ENCODE measurements at regions of chr10 and their contacts with region 1.

Region 1: DNA sequence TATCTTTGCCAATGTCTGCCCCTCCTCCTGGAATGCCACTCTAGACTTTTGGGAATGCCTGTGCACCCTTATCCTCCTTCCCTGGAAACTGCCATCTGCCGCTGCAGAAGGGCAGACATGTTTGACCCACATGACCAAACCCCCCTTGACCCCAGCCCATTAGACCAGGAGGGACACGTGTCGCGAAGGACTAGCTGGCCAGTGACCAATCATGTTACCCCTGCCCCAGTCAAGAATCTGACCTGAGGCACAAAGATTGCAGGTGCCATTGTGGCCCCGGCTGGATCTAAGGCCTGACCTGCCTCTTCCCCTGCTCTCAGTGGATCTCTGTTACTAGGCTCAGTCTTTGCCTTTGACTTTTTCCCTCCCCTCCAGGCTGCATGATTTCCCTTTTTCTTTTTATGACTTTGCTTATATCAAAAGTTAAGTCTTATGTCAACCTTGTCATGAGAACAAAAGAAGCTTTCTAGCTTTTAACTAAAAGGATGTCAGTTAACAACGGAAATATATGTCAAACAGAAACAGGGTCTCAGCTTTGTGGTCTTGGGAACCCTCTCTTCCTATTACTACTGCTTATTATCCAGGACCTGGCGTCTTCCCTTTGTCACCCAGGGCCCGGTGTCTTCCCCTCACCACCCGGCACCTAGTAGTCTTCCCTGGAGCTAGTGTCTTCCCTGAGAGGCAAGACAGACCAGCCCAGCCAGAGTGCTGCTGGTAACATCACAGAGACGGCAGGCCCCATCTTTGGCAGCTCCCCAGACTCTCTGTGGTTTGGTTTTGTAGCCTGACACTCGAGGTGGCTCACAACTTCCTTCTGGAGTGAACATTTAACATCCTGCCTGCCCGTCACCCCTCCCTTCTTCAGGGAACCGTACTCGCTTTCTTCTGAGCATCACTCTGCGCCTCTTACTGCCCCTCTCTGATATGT is 24.4 kb upstream of the PPIF start:
- DNase-seq: peak; percentile 95
- H3K4me3 Mint-ChIP-seq: peak overlapping the region; percentile 33
- H3K27ac Mint-ChIP-seq: peak overlapping the region; percentile 92
- H3K4me1 Mint-ChIP-seq: peaks cover 68% of the 10 kb centered on the region
- H3K27me3 Mint-ChIP-seq: no peaks in the 10 kb centered on the region

Region 2: GRCh38 chr10:79249186-79250121 is 73.4 kb before region 1 on chr10:
- CTCF ChIA-PET with region 1: interaction called, 3 read pairs
- intact Hi-C with region 1: loop called (anchors 1 kb)
- DNase-seq: peak; percentile 61
- H3K4me3 Mint-ChIP-seq: peak overlapping the region; percentile 37
- H3K27ac Mint-ChIP-seq: peak overlapping the region; percentile 73
- H3K4me1 Mint-ChIP-seq: peaks cover 50% of the 10 kb centered on the region
- H3K27me3 Mint-ChIP-seq: no peaks in the 10 kb centered on the region

Region 3: DNA sequence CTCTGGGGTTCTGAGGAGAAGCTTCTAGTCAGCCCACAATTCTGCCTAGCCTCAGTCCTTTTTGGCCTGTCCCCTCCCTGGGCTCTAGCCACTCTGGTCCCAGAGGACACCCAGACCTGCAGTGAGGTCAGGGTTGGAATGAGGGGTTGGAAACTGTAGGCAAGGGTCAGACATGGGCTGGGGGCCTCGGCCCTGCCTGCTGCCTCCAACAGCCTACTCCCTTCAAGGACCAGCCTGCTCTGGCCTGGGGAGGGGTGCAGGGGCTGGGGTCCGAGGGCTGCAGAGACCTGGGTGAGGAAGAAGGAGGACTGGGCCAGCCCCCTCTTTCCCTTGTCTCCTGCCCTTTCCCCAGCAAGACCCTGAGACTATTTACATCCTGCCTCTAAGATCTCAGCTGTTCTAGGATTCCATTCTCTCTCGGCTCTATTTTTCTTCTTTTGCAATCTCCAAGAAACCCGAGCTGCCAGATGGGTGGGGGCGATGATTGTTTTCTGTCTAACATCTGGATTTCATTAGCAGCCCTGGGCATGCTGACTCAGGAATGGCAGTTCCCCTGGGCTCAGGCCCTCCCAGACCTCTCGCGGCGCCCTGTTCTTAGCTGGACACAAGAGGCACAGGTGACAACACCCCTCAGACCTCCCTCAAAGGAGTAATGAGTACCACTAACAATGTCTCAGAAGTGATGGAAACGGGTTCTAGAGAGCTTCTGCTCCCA is 99.5 kb after region 1 on chr10:
- CTCF ChIA-PET with region 1: no interaction called
- intact Hi-C with region 1: no loop called
- DNase-seq: no peak
- H3K4me3 Mint-ChIP-seq: no peak overlapping the region
- H3K27ac Mint-ChIP-seq: no peak overlapping the region
- H3K4me1 Mint-ChIP-seq: no peaks in the 10 kb centered on the region
- H3K27me3 Mint-ChIP-seq: no peaks in the 10 kb centered on the region

Region 4: DNA sequence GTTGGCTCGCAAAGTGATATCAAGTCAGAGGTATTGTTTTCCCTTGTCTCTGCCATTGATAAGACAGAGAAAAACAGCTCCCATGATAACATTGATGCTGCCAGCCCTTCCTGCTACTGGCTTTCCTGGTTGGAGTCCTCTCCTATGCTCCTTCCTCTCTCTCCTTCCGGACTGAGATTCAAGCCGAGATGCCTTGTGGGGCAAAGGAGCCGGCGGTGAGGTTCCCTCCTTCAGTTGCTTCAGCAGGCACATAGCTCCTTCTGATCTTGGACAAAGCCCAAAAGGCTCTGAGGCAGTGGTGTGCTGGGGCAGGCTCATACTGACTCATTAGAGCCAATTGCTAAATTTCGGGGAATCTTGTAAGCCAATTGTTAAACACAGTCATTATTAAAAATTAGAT is 131.4 kb after region 1 on chr10:
- CTCF ChIA-PET with region 1: no interaction called
- intact Hi-C with region 1: no loop called
- DNase-seq: no peak
- H3K4me3 Mint-ChIP-seq: no peak overlapping the region
- H3K27ac Mint-ChIP-seq: no peak overlapping the region
- H3K4me1 Mint-ChIP-seq: no peaks in the 10 kb centered on the region
- H3K27me3 Mint-ChIP-seq: peaks cover 5% of the 10 kb centered on the region

Measured in activated naive CD4-positive, alpha-beta T cell treated with anti-CD3 and anti-CD28 coated beads for 36 hours (primary cell).